Breast epithelium (tissue), 4 donors: ENCODE measurements at regions of chr5 and their contacts with region 1.

Region 1: GRCh38 chr5:140041492-140042392 is 1.4 kb downstream of the NRG2 start:
- DNase-seq: peak in 1 of 2 donors; percentile 46
- H3K4me3 ChIP-seq: peak overlapping the region; percentile 54 to 73 (median 56)
- H3K27ac ChIP-seq: peak overlapping the region; percentile 67 to 74
- H3K4me1 ChIP-seq: peaks cover 4 to 8% of the 10 kb centered on the region in 2 donors
- H3K27me3 ChIP-seq: no peaks in the 10 kb centered on the region
- CTCF ChIP-seq: no peak
- POLR2A ChIP-seq: no peak

Region 2: GRCh38 chr5:140116716-140117115 is 75.0 kb after region 1 on chr5:
- intact Hi-C with region 1: loop called (anchors 2 kb)
- DNase-seq: no peak
- H3K4me3 ChIP-seq: peak overlapping the region in 1 of 3 donors; percentile 17
- H3K27ac ChIP-seq: no peak overlapping the region
- H3K4me1 ChIP-seq: peaks cover 0 to 17% of the 10 kb centered on the region in 2 donors
- H3K27me3 ChIP-seq: no peaks in the 10 kb centered on the region
- CTCF ChIP-seq: no peak
- POLR2A ChIP-seq: no peak